ENCODE measurements at regions of chr6 and their contacts with region 1.

Region 1: DNA sequence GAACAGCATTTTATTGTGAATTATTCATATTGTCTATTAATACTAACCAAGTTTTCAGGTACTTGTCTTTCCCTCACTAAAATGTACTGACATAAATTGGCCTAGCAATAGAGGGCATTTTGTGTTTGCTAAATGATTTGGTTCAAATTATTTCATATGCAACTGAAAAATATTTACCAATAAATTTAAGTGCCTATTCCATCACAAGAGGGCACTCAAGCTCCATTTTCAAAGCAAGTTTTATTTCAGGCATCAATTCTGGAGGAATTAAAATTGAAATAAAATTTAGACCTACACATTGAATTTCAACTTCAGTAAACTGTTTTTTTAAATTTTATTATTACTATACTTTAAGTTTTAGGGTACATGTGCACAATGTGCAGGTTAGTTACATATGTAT is 114.3 kb upstream of the SYNCRIP start:
- DNase-seq: no peak
- H3K4me3 Mint-ChIP-seq: no peak overlapping the region
- H3K27ac Mint-ChIP-seq: no peak overlapping the region
- H3K4me1 Mint-ChIP-seq: peaks cover 7% of the 10 kb centered on the region
- H3K27me3 Mint-ChIP-seq: peaks cover 23% of the 10 kb centered on the region
- CTCF ChIP-seq: peak; percentile 39

Region 2: DNA sequence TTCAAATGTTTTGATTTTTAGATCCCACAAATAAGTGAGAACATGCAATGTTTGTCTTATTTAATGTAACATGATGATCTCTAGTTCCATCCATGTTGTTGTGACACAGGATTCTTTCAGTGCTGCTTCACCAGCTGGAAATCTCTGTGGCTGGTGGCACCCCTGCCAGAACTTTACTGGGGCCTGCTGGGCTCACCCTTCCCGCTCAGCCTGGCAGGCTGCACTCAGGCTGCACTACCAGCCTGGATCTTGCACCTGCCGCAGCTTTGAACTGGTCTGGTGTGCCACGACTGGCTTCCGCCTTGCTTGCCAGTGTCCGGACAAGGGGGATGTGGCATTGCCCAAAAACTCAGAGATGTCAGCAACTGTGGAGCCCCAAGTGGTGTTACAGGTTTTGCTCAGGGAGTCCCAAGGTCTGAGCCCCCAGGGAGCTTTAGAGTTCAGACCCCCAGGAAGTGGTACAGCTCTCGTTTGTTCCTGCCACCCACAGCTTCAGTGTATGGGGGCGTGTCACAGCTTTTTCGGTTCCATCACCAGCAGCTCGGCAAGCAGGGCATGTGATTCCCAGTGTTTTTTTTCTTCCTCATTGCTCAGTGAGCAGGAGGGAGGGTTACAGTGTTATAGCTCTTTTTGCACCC is 42.0 kb before region 1 on chr6:
- CTCF ChIA-PET with region 1: no interaction called
- intact Hi-C with region 1: no loop called
- DNase-seq: no peak
- H3K4me3 Mint-ChIP-seq: no peak overlapping the region
- H3K27ac Mint-ChIP-seq: no peak overlapping the region
- H3K4me1 Mint-ChIP-seq: no peaks in the 10 kb centered on the region
- H3K27me3 Mint-ChIP-seq: no peaks in the 10 kb centered on the region
- CTCF ChIP-seq: no peak

Region 3: GRCh38 chr6:85772641-85773040 is 15.7 kb after region 1 on chr6:
- CTCF ChIA-PET with region 1: no interaction called
- intact Hi-C with region 1: no loop called
- DNase-seq: no peak
- H3K4me3 Mint-ChIP-seq: no peak overlapping the region
- H3K27ac Mint-ChIP-seq: no peak overlapping the region
- H3K4me1 Mint-ChIP-seq: no peaks in the 10 kb centered on the region
- H3K27me3 Mint-ChIP-seq: peaks cover 38% of the 10 kb centered on the region
- CTCF ChIP-seq: no peak

Region 4: GRCh38 chr6:86192123-86192522 is 435.1 kb after region 1 on chr6:
- CTCF ChIA-PET with region 1: no interaction called
- intact Hi-C with region 1: loop called (anchors 5 kb)
- DNase-seq: peak; percentile 33
- H3K4me3 Mint-ChIP-seq: no peak overlapping the region
- H3K27ac Mint-ChIP-seq: no peak overlapping the region
- H3K4me1 Mint-ChIP-seq: no peaks in the 10 kb centered on the region
- H3K27me3 Mint-ChIP-seq: peaks cover 24% of the 10 kb centered on the region
- CTCF ChIP-seq: peak; percentile 46

Region 5: DNA sequence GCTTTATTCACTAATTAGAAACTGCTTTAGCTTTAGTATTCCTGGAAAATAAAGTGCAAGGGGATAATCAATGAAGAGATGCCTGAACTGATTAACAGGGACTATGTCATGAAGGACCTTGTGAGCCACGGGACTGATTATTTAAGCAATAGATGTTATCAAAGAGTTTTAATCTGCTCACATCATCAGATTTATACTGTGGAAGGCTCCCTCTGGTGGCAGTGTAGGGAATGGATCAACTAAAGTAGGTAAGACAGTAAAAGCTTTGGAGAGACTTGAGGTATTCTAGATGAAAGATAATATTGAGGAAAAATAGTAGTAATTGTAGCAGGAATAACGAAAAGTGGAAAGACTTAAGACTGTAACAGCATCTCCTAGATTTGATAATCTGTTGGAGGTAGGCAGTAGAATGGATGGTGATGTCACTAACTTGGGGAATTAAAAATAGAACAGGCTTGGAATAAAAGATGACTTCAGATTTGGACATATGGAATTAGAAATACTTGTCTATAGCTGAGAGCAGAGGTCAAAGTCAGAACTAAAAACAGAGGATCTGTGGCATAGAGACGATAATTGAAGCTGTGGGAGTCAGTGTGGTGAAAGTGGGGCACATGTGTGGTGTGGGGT is 1100.1 kb after region 1 on chr6:
- CTCF ChIA-PET with region 1: no interaction called
- intact Hi-C with region 1: loop called (anchors 5 kb)
- DNase-seq: peak; percentile 67
- H3K4me3 Mint-ChIP-seq: no peak overlapping the region
- H3K27ac Mint-ChIP-seq: no peak overlapping the region
- H3K4me1 Mint-ChIP-seq: no peaks in the 10 kb centered on the region
- H3K27me3 Mint-ChIP-seq: no peaks in the 10 kb centered on the region
- CTCF ChIP-seq: peak; percentile 67